CD8-positive, alpha-beta memory T cell (primary cell): ENCODE measurements at regions of chr1 and their contacts with region 1.

Region 1: GRCh38 chr1:160251687-160252526 is 10.4 kb downstream of the DCAF8 start:
- DNase-seq: peak; percentile 30 to 72 (median 43)
- H3K4me3 ChIP-seq: no peak overlapping the region
- H3K4me3 Mint-ChIP-seq: no peak overlapping the region
- H3K27ac ChIP-seq: no peak overlapping the region
- H3K27ac Mint-ChIP-seq: peak overlapping the region; percentile 8 to 87 (median 74)
- H3K4me1 ChIP-seq: peaks cover 5% of the 10 kb centered on the region
- H3K4me1 Mint-ChIP-seq: peaks cover 15 to 41% (median 29%) of the 10 kb centered on the region in 3 donors
- H3K27me3 ChIP-seq: no peaks in the 10 kb centered on the region
- H3K27me3 Mint-ChIP-seq: no peaks in the 10 kb centered on the region

Region 2: DNA sequence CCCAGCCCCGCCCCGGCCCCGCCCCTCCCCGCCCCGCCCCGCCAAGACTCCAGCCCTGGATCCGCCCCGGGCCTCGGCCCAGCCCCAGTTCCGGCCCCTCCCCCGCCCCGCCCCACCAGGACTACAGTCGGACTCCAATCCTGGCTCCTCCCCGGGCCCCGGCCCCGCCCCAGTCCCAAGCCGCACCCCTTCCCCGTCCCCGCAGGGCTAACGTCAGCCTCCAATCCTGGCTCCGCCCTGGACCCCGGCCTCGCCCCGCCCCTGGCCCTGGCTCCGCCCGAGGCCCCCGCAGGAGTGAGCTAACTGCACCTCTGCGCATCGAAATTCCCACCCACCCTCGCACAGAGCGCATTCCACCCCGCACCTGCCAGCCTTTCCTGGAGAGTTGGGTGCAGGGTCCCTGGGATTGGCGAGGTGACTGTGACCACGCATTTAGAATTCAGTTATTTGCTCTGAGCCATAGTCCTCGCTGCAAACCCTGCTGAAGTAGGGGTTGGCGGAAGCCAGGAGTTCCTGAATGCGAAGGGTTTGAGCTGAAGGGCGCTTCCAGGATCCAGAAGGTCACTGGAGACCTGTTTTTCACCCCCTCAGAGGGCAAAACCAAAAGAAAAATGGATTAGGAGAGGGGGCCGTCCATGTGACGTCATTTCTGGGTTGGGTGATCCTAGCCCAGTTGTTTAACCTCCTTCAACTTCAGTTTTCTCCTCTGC is 152.9 kb before region 1 on chr1:
- CTCF ChIA-PET with region 1: interaction called, 25 read pairs
- POLR2A ChIA-PET with region 1: no interaction called
- DNase-seq: peak; percentile 94 to 99 (median 97)
- H3K4me3 ChIP-seq: peak overlapping the region; percentile 63
- H3K4me3 Mint-ChIP-seq: peak overlapping the region; percentile 76 to 91 (median 81)
- H3K27ac ChIP-seq: peak overlapping the region; percentile 79
- H3K27ac Mint-ChIP-seq: peak overlapping the region; percentile 79 to 99 (median 96)
- H3K4me1 ChIP-seq: peaks cover 54% of the 10 kb centered on the region
- H3K4me1 Mint-ChIP-seq: peaks cover 49 to 82% (median 52%) of the 10 kb centered on the region in 3 donors
- H3K27me3 ChIP-seq: no peaks in the 10 kb centered on the region
- H3K27me3 Mint-ChIP-seq: peaks cover 0 to 2% of the 10 kb centered on the region in 2 donors

Region 3: GRCh38 chr1:160193091-160193819 is 58.7 kb before region 1 on chr1:
- CTCF ChIA-PET with region 1: interaction called, 22 read pairs
- POLR2A ChIA-PET with region 1: no interaction called
- DNase-seq: peak; percentile 58 to 85 (median 76)
- H3K4me3 ChIP-seq: no peak overlapping the region
- H3K4me3 Mint-ChIP-seq: no peak overlapping the region
- H3K27ac ChIP-seq: no peak overlapping the region
- H3K27ac Mint-ChIP-seq: no peak overlapping the region
- H3K4me1 ChIP-seq: peaks cover 3% of the 10 kb centered on the region
- H3K4me1 Mint-ChIP-seq: no peaks in the 10 kb centered on the region
- H3K27me3 ChIP-seq: no peaks in the 10 kb centered on the region
- H3K27me3 Mint-ChIP-seq: peaks cover 2 to 9% of the 10 kb centered on the region in 2 donors

Region 4: GRCh38 chr1:160261893-160262794 is 10.2 kb after region 1 on chr1 and contains the start of gene DCAF8:
- CTCF ChIA-PET with region 1: interaction called, 33 read pairs
- POLR2A ChIA-PET with region 1: interaction called, 9 read pairs
- DNase-seq: peak; percentile 95 to 99 (median 96)
- H3K4me3 ChIP-seq: peak within 1 kb of the TSS; percentile 83
- H3K4me3 Mint-ChIP-seq: peak within 1 kb of the TSS; percentile 90 to 100 (median 97)
- H3K27ac ChIP-seq: peak within 1 kb of the TSS; percentile 92
- H3K27ac Mint-ChIP-seq: peak within 1 kb of the TSS; percentile 96 to 100 (median 98)
- H3K4me1 ChIP-seq: peaks cover 33% of the 10 kb centered on the region
- H3K4me1 Mint-ChIP-seq: peaks cover 36 to 56% (median 50%) of the 10 kb centered on the region in 3 donors
- H3K27me3 ChIP-seq: no peaks in the 10 kb centered on the region
- H3K27me3 Mint-ChIP-seq: peaks cover 0 to 6% of the 10 kb centered on the region in 2 donors
- total RNA-seq, gene DCAF8: 95.6 to 97.0 TPM

Region 5: DNA sequence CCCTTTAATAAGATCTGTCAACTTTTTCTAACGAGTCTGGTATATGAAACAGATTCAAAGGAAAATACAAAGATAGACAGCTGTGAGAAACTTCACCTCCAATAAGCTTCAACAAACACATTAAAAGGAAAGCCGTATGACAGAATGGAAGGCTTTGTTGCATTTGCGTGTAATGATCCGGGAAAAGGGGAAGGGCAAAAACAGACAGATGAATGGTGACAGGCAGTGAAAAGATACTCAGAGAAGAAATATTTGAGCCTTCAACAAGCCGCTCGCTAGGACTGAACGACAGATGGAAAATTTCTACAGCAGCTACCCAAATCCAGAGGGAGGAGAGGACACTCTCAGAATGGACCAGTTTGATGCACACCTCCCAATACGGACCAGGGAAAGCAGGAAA is 76.3 kb after region 1 on chr1:
- CTCF ChIA-PET with region 1: no interaction called
- POLR2A ChIA-PET with region 1: no interaction called
- DNase-seq: no peak
- H3K4me3 ChIP-seq: no peak overlapping the region
- H3K4me3 Mint-ChIP-seq: no peak overlapping the region
- H3K27ac ChIP-seq: no peak overlapping the region
- H3K27ac Mint-ChIP-seq: peak overlapping the region in 3 of 8 donors; percentile 6 to 50 (median 36)
- H3K4me1 ChIP-seq: no peaks in the 10 kb centered on the region
- H3K4me1 Mint-ChIP-seq: peaks cover 3 to 7% (median 4%) of the 10 kb centered on the region in 3 donors
- H3K27me3 ChIP-seq: no peaks in the 10 kb centered on the region
- H3K27me3 Mint-ChIP-seq: no peaks in the 10 kb centered on the region